Activated naive CD4-positive, alpha-beta T cell treated with anti-CD3 and anti-CD28 coated beads, Interleukin-2, amount 10 ng/mL, durations not matched to agents 7 days and 5 days (primary cell): ENCODE measurements at regions of chr10 and their contacts with region 1.

Region 1: DNA sequence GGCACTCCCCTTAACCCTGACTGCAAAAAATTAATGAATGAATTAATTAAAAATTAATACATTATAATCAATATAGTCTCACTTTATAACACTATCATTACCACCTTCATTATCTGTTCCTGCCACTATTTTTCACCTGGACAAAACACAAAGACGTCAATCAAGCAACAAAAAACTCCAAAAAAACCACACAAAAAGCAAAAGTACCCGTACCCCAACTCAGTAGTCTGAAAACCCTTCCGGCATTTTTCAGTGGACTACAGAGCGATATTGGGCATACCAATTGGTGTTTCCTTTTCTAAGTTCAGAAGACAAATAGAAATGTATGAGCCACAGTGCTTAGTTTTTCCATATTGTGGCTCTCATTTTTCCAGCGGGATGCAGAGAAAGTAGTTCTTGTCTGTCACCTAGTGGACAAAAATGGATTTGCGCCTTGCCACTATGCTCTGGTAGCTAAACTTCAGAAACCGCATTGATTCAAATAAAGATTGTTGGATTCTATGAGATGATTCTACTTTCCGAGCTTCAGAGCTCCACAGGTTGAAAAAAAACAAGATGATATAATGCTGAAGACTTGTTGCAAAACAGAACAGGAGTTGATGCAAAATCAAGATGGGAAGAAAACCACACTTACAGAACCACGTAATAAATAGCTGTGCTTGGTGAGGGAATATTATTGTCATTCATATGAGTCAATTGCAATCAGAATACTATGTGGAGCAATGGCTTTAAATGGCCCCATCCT is 50.6 kb upstream of the ITGB1 start:
- DNase-seq: peak; percentile 69
- H3K4me3 Mint-ChIP-seq: peak overlapping the region; percentile 14
- H3K27ac Mint-ChIP-seq: peak overlapping the region; percentile 62
- H3K4me1 Mint-ChIP-seq: peaks cover 33% of the 10 kb centered on the region
- H3K27me3 Mint-ChIP-seq: peaks cover 18% of the 10 kb centered on the region

Region 2: DNA sequence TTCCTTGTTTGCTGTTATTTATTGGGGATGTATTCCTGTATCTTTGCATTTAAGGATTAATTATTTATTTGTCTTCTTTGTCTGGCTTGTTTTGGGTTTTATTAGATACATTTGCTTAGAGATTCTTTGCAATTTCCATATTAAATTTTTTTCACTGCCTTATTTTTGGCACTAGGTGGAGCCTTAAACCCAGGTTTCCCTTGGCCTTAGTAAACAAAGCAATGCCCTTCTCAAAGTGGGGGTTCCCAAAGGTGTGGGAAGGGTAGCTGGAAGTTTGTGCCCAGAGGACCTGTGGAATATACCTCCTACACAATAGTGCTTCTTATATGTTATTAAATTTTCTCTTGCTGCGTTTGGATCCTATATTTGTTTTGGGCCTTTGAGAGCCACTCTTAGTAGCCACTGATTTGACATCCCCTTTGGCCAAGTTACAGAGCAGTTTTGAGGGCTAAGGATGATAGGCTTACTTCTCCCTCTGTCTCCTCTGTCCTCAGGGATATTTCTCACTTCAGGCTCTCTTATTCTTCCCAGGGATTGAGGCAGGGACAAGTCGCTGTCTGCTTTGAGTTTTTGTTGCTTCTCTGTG is 213.0 kb before region 1 on chr10:
- CTCF ChIA-PET with region 1: interaction called, 12 read pairs
- DNase-seq: no peak
- H3K4me3 Mint-ChIP-seq: no peak overlapping the region
- H3K27ac Mint-ChIP-seq: no peak overlapping the region
- H3K4me1 Mint-ChIP-seq: no peaks in the 10 kb centered on the region
- H3K27me3 Mint-ChIP-seq: no peaks in the 10 kb centered on the region

Region 3: GRCh38 chr10:33032654-33033151 is 24.0 kb after region 1 on chr10:
- CTCF ChIA-PET with region 1: no interaction called
- DNase-seq: no peak
- H3K4me3 Mint-ChIP-seq: no peak overlapping the region
- H3K27ac Mint-ChIP-seq: no peak overlapping the region
- H3K4me1 Mint-ChIP-seq: peaks cover 20% of the 10 kb centered on the region
- H3K27me3 Mint-ChIP-seq: peaks cover 6% of the 10 kb centered on the region

Region 4: DNA sequence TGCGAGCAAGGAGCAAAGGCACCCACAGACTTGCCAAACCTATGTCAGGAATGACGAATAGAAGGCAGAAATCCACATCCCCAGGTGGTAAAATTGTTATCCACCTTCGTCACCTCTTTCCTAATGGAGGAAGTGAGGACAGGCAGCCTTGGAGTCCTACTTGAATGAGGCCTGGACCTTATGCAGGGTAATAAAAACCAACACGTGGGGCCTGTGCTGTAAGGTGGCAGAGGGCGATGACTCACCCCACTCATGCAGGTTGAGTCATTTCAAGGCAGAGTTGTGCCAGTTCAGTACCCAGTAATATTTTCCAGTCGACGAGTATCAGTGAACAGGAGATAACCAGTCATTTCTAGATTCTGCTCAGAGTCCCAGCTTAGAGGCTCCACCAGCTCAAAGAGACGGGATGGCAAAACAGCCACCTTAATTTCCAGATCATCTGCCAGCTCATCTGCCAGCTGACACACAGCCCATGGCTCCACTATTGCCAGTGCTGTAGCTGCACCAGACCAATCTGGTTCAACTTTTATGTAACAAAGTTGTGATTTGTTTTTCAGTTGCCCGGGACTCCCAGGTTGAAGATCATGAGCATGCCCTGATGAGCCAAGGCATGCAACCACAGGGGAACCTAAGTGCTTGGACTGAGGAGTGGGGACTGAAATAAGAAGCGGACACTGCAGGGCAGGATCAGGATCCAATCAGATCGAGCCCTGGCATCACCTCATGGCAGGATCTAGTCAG is 125.5 kb after region 1 on chr10:
- CTCF ChIA-PET with region 1: interaction called, 10 read pairs
- DNase-seq: peak; percentile 62
- H3K4me3 Mint-ChIP-seq: no peak overlapping the region
- H3K27ac Mint-ChIP-seq: peak overlapping the region; percentile 77
- H3K4me1 Mint-ChIP-seq: peaks cover 69% of the 10 kb centered on the region
- H3K27me3 Mint-ChIP-seq: peaks cover 3% of the 10 kb centered on the region

Region 5: GRCh38 chr10:33155720-33156638 is 147.3 kb after region 1 on chr10:
- CTCF ChIA-PET with region 1: interaction called, 21 read pairs
- DNase-seq: peak; percentile 53
- H3K4me3 Mint-ChIP-seq: no peak overlapping the region
- H3K27ac Mint-ChIP-seq: no peak overlapping the region
- H3K4me1 Mint-ChIP-seq: peaks cover 42% of the 10 kb centered on the region
- H3K27me3 Mint-ChIP-seq: peaks cover 11% of the 10 kb centered on the region